ENCODE measurements at regions of chr7 and their contacts with region 1.

Region 1: DNA sequence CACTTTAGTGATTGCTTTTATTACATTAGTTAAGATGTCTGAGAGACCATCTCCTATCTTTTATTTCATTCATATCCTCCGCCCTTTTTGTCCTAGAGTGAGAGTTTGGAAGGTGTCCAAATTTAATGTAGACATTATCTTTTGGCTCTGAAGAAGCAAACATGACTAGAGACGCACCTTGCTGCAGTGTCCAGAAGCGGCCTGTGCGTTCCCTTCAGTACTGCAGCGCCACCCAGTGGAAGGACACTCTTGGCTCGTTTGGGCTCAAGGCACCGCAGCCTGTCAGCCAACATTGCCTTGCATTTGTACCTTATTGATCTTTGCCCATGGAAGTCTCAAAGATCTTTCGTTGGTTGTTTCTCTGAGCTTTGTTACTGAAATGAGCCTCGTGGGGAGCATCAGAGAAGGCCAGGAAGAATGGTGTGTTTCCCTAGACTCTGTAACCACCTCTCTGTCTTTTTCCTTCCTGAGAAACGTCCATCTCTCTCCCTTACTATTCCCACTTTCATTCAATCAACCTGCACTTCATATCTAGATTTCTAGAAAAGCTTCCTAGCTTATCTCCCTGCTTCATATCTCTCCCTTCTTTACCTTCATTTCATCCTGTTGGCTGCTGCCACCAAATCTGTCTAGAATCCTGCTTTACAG is 10.4 kb upstream of the CLCN1 start:
- DNase-seq: peak; percentile 32 to 62 (median 54)
- ATAC-seq: peak; percentile 87
- H3K4me3 ChIP-seq: no peak overlapping the region
- H3K4me3 Mint-ChIP-seq: peak overlapping the region in 1 of 10 donors; percentile 22
- H3K27ac ChIP-seq: no peak overlapping the region
- H3K27ac Mint-ChIP-seq: peak overlapping the region; percentile 4 to 85 (median 30)
- H3K4me1 ChIP-seq: peaks cover 0 to 2% of the 10 kb centered on the region in 2 donors
- H3K4me1 Mint-ChIP-seq: peaks cover 20 to 72% (median 37%) of the 10 kb centered on the region in 7 donors
- H3K27me3 ChIP-seq: no peaks in the 10 kb centered on the region
- H3K27me3 Mint-ChIP-seq: no peaks in the 10 kb centered on the region

Region 2: DNA sequence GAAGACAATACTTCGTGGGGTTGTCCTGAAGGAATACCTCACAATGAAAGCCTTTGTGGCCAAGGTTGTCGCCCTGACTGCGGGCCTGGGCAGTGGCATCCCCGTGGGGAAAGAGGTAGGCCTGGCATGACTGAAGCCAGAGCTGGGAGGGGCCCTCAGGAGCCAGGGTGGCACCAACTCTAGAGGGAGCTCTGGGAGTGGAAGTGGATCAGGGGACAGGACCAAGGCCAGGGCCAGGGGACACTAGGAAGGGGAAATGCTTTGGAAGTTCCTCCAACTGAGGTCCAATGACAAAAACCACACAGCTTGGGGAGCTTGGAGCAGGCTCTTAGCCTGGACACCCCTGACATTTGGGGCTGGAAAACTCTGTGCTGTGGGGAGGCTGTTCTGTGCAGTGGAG is 16.2 kb after region 1 on chr7:
- CTCF ChIA-PET with region 1: no interaction called
- POLR2A ChIA-PET with region 1: no interaction called
- intact Hi-C with region 1: no loop called
- DNase-seq: no peak
- ATAC-seq: peak; percentile 56
- H3K4me3 ChIP-seq: no peak overlapping the region
- H3K4me3 Mint-ChIP-seq: no peak overlapping the region
- H3K27ac ChIP-seq: no peak overlapping the region
- H3K27ac Mint-ChIP-seq: no peak overlapping the region
- H3K4me1 ChIP-seq: peaks cover 0 to 9% of the 10 kb centered on the region in 2 donors
- H3K4me1 Mint-ChIP-seq: peaks cover 0 to 23% (median 9%) of the 10 kb centered on the region in 7 donors
- H3K27me3 ChIP-seq: no peaks in the 10 kb centered on the region
- H3K27me3 Mint-ChIP-seq: peaks cover 0 to 17% (median 0%) of the 10 kb centered on the region in 5 donors

Region 3: DNA sequence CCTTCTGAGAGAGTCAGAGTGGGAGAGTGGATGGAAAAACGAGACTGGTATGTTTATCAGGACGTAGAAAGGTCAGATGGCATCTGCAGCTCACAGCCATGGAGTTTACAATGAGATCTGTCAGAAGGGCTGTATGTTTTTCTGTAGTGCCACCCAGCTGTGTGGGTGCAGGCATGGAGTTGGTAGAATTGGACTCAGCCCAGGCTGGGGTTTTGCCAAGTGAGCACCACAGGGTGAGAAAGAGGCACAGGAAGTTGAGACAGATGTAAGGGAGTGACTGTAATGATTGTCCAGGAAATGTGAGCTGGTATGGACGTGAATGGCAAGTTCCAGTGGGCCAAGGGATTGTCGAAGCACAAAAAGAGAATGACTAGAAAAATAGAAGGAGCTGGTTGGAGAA is 66.5 kb after region 1 on chr7:
- CTCF ChIA-PET with region 1: interaction called, 4 read pairs
- POLR2A ChIA-PET with region 1: no interaction called
- intact Hi-C with region 1: loop called in 1 of 2 experiments (anchors 5 kb)
- DNase-seq: peak in 5 of 9 donors; percentile 38 to 64 (median 46)
- ATAC-seq: peak; percentile 76
- H3K4me3 ChIP-seq: no peak overlapping the region
- H3K4me3 Mint-ChIP-seq: peak overlapping the region in 9 of 10 donors; percentile 13 to 67 (median 45)
- H3K27ac ChIP-seq: no peak overlapping the region
- H3K27ac Mint-ChIP-seq: peak overlapping the region in 8 of 9 donors; percentile 3 to 90 (median 70)
- H3K4me1 ChIP-seq: peaks cover 36 to 40% of the 10 kb centered on the region in 2 donors
- H3K4me1 Mint-ChIP-seq: peaks cover 34 to 59% (median 55%) of the 10 kb centered on the region in 7 donors
- H3K27me3 ChIP-seq: no peaks in the 10 kb centered on the region
- H3K27me3 Mint-ChIP-seq: peaks cover 0 to 22% (median 0%) of the 10 kb centered on the region in 5 donors

Measured in naive thymus-derived CD4-positive, alpha-beta T cell (primary cell).